ENCODE measurements at regions of chr18 and their contacts with region 1.

Region 1: DNA sequence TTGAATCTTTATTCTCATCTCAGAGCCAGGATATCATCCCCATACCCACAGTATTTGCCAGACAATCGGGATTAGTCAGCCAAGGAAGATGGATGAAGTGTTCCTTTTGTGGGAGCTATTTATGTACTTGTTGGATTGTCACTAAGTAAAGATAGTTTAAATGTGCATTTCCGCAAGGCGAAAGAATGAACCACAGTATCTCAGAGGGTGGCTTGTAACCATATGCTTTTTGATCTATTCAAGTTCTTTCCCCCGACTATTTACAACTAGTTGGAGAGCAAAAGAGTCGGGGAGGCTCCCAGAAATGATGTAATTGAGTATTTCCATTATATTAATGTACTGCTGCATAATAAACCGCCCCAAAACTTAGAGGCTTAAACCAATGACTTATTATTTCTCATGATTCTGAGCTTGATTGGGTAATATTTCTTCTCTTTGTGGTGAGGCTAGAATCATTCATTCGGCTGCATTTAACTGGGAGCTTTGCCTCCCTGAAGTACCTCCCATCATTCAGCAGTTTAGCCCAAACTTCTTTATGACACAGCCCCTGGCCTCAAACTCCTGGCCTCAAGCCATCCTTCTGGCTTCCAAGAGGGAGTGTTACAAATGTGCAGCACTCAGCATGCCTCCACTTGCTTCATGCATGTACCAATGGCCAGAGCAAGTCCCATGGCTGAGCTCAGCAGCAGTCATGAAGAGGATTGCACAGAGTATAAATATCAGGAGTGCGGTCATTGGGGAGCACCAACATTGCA is 423.7 kb downstream of the METTL4 start:
- DNase-seq: peak; percentile 85
- ATAC-seq: peak; percentile 76
- H3K4me3 ChIP-seq: peak overlapping the region; percentile 37; the same call in 1 of the 2 replicates
- H3K27ac ChIP-seq: peak overlapping the region; percentile 90
- H3K4me1 ChIP-seq: peaks cover 35% of the 10 kb centered on the region
- H3K27me3 ChIP-seq: no peaks in the 10 kb centered on the region
- CTCF ChIP-seq: no peak

Region 2: DNA sequence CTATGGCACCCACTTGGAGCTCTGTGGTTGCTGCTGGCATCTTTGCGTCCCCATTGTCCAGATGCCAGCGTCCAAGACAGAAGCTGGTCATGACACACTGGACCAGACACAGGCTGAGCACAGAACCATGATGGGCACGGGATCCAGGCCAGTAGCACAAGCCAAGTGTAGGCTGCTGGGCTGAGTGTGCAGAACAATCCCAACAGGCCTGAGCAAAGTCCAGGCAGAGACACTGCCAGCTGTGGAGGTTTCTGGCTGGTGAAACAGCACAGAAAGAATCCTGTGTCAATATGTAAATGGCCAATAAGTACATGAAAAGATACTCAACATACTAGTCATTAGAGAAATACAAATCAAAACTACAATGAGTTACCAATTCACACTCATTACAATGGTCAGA is 281.8 kb before region 1 on chr18:
- CTCF ChIA-PET with region 1: no interaction called
- POLR2A ChIA-PET with region 1: no interaction called
- intact Hi-C with region 1: no loop called
- DNase-seq: no peak
- ATAC-seq: no peak
- H3K4me3 ChIP-seq: no peak overlapping the region
- H3K27ac ChIP-seq: no peak overlapping the region
- H3K4me1 ChIP-seq: no peaks in the 10 kb centered on the region
- H3K27me3 ChIP-seq: peaks cover 13% of the 10 kb centered on the region; the same call in 1 of the 2 replicates
- CTCF ChIP-seq: no peak

Region 3: GRCh38 chr18:2111456-2111855 is 36.2 kb before region 1 on chr18:
- CTCF ChIA-PET with region 1: interaction called, 3 read pairs
- POLR2A ChIA-PET with region 1: no interaction called
- intact Hi-C with region 1: loop called (anchors 1 kb)
- DNase-seq: peak; percentile 60
- ATAC-seq: peak; percentile 56
- H3K4me3 ChIP-seq: no peak overlapping the region
- H3K27ac ChIP-seq: no peak overlapping the region; the same call in 1 of the 2 replicates
- H3K4me1 ChIP-seq: peaks cover 37% of the 10 kb centered on the region
- H3K27me3 ChIP-seq: no peaks in the 10 kb centered on the region
- CTCF ChIP-seq: no peak

Region 4: GRCh38 chr18:2186967-2187366 is 39.3 kb after region 1 on chr18:
- CTCF ChIA-PET with region 1: no interaction called
- POLR2A ChIA-PET with region 1: interaction called, 3 read pairs
- intact Hi-C with region 1: loop called (anchors 2 kb)
- DNase-seq: peak; percentile 27
- ATAC-seq: peak; percentile 90
- H3K4me3 ChIP-seq: no peak overlapping the region
- H3K27ac ChIP-seq: no peak overlapping the region
- H3K4me1 ChIP-seq: no peaks in the 10 kb centered on the region
- H3K27me3 ChIP-seq: no peaks in the 10 kb centered on the region
- CTCF ChIP-seq: no peak

Region 5: GRCh38 chr18:2212806-2213205 is 65.2 kb after region 1 on chr18:
- CTCF ChIA-PET with region 1: no interaction called
- POLR2A ChIA-PET with region 1: no interaction called
- intact Hi-C with region 1: loop called (anchors 1 kb)
- DNase-seq: no peak
- ATAC-seq: no peak
- H3K4me3 ChIP-seq: no peak overlapping the region
- H3K27ac ChIP-seq: no peak overlapping the region
- H3K4me1 ChIP-seq: no peaks in the 10 kb centered on the region
- H3K27me3 ChIP-seq: no peaks in the 10 kb centered on the region
- CTCF ChIP-seq: no peak